ENCODE measurements at regions of chr9 and their contacts with region 1.

Region 1: DNA sequence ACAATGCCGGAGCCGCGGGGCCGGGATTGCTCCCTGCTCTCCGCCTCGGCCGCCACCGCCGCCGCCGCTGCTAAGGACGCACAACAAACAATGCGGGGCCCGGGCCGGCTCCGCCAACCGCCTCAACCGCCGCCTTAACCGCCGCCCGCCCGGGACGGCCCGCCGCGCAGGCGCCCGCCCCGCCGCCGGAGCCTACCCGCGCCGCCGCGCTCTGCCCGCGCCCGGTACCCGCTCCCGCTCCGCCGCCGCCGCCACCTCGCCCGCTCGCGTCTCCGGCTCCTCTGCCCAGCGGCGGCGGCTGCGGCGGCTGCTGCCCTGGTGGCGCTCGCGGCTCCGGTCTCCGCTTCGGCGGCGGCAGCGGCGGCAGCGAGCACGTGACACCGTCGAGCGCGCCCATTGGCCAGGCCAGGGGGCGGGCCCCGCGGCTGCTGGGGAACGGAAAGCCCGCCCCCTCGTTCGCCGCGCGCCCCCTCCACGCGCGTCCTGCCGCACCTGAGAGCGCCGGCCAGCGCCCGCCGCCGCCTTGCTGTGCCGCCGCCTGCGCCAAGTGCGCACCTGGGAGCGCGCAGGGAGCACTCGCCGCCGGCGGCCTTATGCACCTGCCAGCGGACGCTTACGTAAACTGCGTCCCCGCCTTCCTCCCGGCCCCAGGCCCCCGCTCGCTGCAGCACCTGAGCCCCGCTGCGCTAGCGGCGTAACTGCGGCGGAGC is at the start of gene STRBP:
- DNase-seq: peak; percentile 93
- H3K4me3 Mint-ChIP-seq: peak within 1 kb of the TSS; percentile 69
- H3K27ac Mint-ChIP-seq: no peak within 1 kb of the TSS
- H3K4me1 Mint-ChIP-seq: peaks cover 18% of the 10 kb centered on the region
- H3K27me3 Mint-ChIP-seq: no peaks in the 10 kb centered on the region
- total RNA-seq, gene STRBP: 27.5 to 29.1 TPM

Region 2: DNA sequence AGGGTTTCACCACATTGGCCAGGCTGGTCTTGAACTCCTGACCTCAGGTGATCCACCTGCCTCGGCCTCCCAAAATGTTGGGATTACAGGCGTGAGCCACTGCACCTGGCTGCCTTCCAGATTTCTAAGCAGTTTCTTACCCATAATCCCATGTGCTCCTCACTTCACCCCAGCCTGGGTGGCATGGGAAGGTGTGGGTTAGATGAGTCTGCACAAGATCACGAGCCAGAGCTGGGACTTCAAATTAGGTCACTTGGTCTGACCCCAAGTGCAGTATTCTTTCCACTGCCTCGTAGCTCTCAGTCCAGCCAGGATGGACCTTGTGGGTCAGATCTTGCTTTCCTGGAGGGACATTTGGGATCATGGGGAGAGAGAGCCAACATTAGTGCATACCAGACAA is 37.5 kb after region 1 on chr9:
- CTCF ChIA-PET with region 1: no interaction called
- POLR2A ChIA-PET with region 1: no interaction called
- intact Hi-C with region 1: loop called (anchors 2 kb)
- DNase-seq: no peak
- H3K4me3 Mint-ChIP-seq: no peak overlapping the region
- H3K27ac Mint-ChIP-seq: no peak overlapping the region
- H3K4me1 Mint-ChIP-seq: peaks cover 12% of the 10 kb centered on the region
- H3K27me3 Mint-ChIP-seq: peaks cover 2% of the 10 kb centered on the region

Region 3: GRCh38 chr9:123322273-123323195 is 54.1 kb after region 1 on chr9:
- CTCF ChIA-PET with region 1: no interaction called
- POLR2A ChIA-PET with region 1: interaction called, 3 read pairs
- intact Hi-C with region 1: loop called (anchors 2 kb)
- DNase-seq: peak; percentile 79
- H3K4me3 Mint-ChIP-seq: peak overlapping the region; percentile 14
- H3K27ac Mint-ChIP-seq: peak overlapping the region; percentile 81
- H3K4me1 Mint-ChIP-seq: peaks cover 23% of the 10 kb centered on the region
- H3K27me3 Mint-ChIP-seq: no peaks in the 10 kb centered on the region